Panc1 (cell line): ENCODE measurements at regions of chr3 and their contacts with region 1.

Region 1: DNA sequence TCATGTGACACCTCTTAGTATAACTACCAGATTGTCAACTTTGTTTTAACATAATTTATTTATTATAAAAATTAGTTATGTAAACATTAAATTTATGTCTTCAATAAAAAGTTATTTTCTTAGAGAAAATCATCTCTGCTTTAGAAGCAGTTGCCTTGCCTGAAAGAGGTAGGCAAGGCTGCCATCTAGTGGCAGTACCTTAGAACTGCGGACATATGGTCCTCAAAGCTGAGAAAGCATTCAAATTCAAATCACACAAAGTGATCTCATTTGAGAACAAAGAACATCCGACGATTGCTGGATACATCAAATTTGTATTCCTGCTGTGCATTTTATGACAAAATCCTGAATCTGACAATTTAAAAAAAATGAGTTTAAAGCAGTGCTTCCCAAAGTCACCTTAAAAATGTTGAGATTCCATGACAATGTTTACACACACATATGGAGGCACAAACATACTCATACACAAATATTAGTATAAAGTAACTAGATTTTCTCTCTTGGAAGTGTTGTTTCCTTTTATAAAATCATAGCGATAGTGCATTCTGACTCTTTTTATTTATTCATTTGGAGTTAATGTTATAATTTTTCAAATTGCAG is 617.4 kb downstream of the CADM2 start:
- DNase-seq: peak; percentile 45
- ATAC-seq: no peak
- H3K4me3 ChIP-seq: no peak overlapping the region
- H3K27ac ChIP-seq: no peak overlapping the region
- H3K4me1 ChIP-seq: no peaks in the 10 kb centered on the region
- H3K27me3 ChIP-seq: no peaks in the 10 kb centered on the region
- CTCF ChIP-seq: peak; percentile 70

Region 2: DNA sequence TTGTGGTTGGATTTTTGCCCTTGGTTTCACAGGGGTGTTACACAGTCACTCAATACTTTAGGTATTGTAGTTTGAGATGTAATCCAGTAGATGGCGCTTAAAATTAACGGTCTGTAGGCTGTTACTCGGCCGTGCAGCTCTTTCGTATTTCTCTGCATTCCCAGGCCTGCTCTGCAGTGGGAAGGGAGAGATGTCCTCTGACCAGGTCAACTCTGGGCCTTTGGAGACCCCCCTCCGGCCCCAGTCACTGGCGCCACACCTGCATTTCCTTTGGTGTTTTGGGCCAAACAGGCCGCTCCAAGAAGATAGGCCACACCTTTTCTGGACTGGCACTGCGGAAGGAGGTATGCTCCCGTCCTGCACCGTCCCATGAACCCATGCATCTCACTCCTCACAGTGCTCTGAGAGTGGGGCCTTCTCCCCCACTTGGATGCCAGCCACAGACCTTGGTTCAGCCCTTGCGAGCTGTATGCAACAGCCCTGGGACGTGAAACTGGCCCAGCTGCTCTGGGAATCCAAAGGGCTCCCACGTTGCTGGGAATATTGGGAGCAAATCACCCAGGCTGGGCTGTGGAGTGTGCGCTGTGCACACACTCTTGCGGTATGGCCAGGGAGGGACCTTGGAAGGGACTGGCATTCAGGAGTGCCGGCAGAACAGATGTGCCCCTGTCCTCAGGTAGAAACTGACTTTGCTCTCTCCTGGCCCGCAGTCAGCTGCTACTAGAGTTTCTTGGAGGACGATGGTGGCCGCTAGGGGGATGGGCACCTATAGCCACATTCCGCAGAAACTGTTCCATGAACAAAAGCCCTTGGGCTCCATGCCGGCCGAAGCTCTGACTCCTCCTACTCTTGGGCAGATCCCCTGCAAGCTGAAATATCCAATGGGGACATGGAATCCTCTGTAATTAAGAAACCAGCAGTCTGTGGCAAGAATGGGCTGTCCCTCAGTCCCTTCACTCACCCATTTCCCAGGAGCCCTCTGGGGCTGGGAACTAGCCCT is 1027.9 kb before region 1 on chr3:
- CTCF ChIA-PET with region 1: no interaction called
- POLR2A ChIA-PET with region 1: no interaction called
- in situ Hi-C with region 1: no loop called
- intact Hi-C with region 1: loop called (anchors 10 kb)
- DNase-seq: peak; percentile 12
- ATAC-seq: peak; percentile 92
- H3K4me3 ChIP-seq: peak overlapping the region; percentile 37 to 63
- H3K27ac ChIP-seq: peak overlapping the region; percentile 29; the same call in 1 of the 2 replicates
- H3K4me1 ChIP-seq: no peaks in the 10 kb centered on the region
- H3K27me3 ChIP-seq: no peaks in the 10 kb centered on the region
- CTCF ChIP-seq: peak; percentile 67

Region 3: GRCh38 chr3:85360742-85361387 is 215.3 kb before region 1 on chr3:
- CTCF ChIA-PET with region 1: interaction called, 3 read pairs
- POLR2A ChIA-PET with region 1: no interaction called
- in situ Hi-C with region 1: no loop called
- intact Hi-C with region 1: loop called (anchors 10 kb)
- DNase-seq: peak; percentile 36
- ATAC-seq: peak; percentile 95
- H3K4me3 ChIP-seq: no peak overlapping the region
- H3K27ac ChIP-seq: no peak overlapping the region
- H3K4me1 ChIP-seq: no peaks in the 10 kb centered on the region
- H3K27me3 ChIP-seq: no peaks in the 10 kb centered on the region
- CTCF ChIP-seq: peak; percentile 75